CD8-positive, alpha-beta T cell (primary cell): ENCODE measurements at regions of chr3 and their contacts with region 1.

Region 1: GRCh38 chr3:184354121-184354728 is 7.2 kb downstream of the CLCN2 start:
- DNase-seq: peak in 8 of 9 experiments; percentile 48 to 79 (median 70)
- ATAC-seq: peak; percentile 81
- H3K4me3 ChIP-seq: no peak overlapping the region
- H3K4me3 Mint-ChIP-seq: no peak overlapping the region
- H3K27ac ChIP-seq: no peak overlapping the region
- H3K27ac Mint-ChIP-seq: no peak overlapping the region
- H3K4me1 ChIP-seq: peaks cover 7% of the 10 kb centered on the region
- H3K4me1 Mint-ChIP-seq: peaks cover 3% of the 10 kb centered on the region
- H3K27me3 ChIP-seq: no peaks in the 10 kb centered on the region
- H3K27me3 Mint-ChIP-seq: no peaks in the 10 kb centered on the region
- CTCF ChIP-seq: peak; percentile 57

Region 2: DNA sequence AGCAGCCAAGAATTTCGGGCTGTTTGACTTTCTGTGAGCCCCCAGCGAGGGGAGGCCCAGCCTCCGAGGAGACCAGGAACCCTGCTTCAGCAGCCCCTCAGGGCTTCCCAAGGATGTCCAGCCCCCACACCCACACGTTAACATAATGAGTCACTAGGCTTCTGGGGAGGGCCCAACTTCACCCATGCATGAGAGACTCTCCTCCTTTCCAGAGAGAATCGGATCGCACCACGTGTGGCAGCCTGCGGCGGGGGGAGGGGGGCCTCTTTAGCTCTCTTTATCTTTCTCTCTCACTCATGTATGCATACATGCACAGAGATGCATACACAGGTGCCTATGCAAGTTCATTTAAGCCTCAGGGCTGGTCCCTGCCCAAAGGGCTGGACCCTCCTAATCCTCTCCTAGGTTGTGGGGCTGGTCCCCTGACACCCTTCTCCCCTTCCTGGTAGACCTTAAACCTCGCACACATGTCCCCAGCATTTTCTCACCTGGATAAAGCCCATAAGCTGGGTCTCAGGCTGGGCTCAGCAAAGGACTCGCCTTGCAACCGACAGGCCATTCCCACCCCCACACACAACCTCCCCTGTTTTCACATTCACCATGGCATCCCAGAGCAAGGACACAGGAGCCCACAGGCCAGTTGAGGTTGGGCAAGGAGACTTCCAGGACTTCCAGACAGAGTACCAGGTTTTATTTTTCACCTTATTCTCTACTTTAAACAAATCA is 182.5 kb before region 1 on chr3:
- CTCF ChIA-PET with region 1: no interaction called
- POLR2A ChIA-PET with region 1: no interaction called
- intact Hi-C with region 1: no loop called
- DNase-seq: no peak
- ATAC-seq: no peak
- H3K4me3 ChIP-seq: no peak overlapping the region
- H3K4me3 Mint-ChIP-seq: no peak overlapping the region
- H3K27ac ChIP-seq: no peak overlapping the region
- H3K27ac Mint-ChIP-seq: no peak overlapping the region
- H3K4me1 ChIP-seq: peaks cover 14% of the 10 kb centered on the region
- H3K4me1 Mint-ChIP-seq: peaks cover 18% of the 10 kb centered on the region
- H3K27me3 ChIP-seq: no peaks in the 10 kb centered on the region
- H3K27me3 Mint-ChIP-seq: no peaks in the 10 kb centered on the region
- CTCF ChIP-seq: no peak

Region 3: GRCh38 chr3:184325715-184326369 is 28.4 kb before region 1 on chr3:
- CTCF ChIA-PET with region 1: interaction called, 12 read pairs
- POLR2A ChIA-PET with region 1: no interaction called
- intact Hi-C with region 1: no loop called
- DNase-seq: no peak
- ATAC-seq: no peak
- H3K4me3 ChIP-seq: no peak overlapping the region
- H3K4me3 Mint-ChIP-seq: no peak overlapping the region
- H3K27ac ChIP-seq: no peak overlapping the region
- H3K27ac Mint-ChIP-seq: peak overlapping the region; percentile 57
- H3K4me1 ChIP-seq: no peaks in the 10 kb centered on the region
- H3K4me1 Mint-ChIP-seq: no peaks in the 10 kb centered on the region
- H3K27me3 ChIP-seq: no peaks in the 10 kb centered on the region
- H3K27me3 Mint-ChIP-seq: no peaks in the 10 kb centered on the region
- CTCF ChIP-seq: no peak

Region 4: GRCh38 chr3:184371570-184372018 is 17.4 kb after region 1 on chr3:
- CTCF ChIA-PET with region 1: interaction called, 30 read pairs
- POLR2A ChIA-PET with region 1: no interaction called
- intact Hi-C with region 1: no loop called
- DNase-seq: peak; percentile 29 to 74 (median 54)
- ATAC-seq: peak; percentile 99
- H3K4me3 ChIP-seq: no peak overlapping the region
- H3K4me3 Mint-ChIP-seq: no peak overlapping the region
- H3K27ac ChIP-seq: no peak overlapping the region
- H3K27ac Mint-ChIP-seq: no peak overlapping the region
- H3K4me1 ChIP-seq: no peaks in the 10 kb centered on the region
- H3K4me1 Mint-ChIP-seq: peaks cover 4% of the 10 kb centered on the region
- H3K27me3 ChIP-seq: no peaks in the 10 kb centered on the region
- H3K27me3 Mint-ChIP-seq: peaks cover 2% of the 10 kb centered on the region
- CTCF ChIP-seq: peak; percentile 74